HepG2 (cell line): ENCODE measurements at regions of chr15 and their contacts with region 1.

Region 1: GRCh38 chr15:31571671-31572070 is 245.0 kb downstream of the KLF13 start:
- DNase-seq: no peak
- ATAC-seq: no peak
- H3K4me3 ChIP-seq: no peak overlapping the region
- H3K27ac ChIP-seq: no peak overlapping the region
- H3K4me1 ChIP-seq: no peaks in the 10 kb centered on the region
- H3K27me3 ChIP-seq: peaks cover 1 to 10% of the 10 kb centered on the region in 2 experiments; a peak in 2 of 5 replicates
- CTCF ChIP-seq: no peak
- EP300 ChIP-seq: no peak
- POLR2A ChIP-seq: no peak
- RAD21 ChIP-seq: no peak

Region 2: DNA sequence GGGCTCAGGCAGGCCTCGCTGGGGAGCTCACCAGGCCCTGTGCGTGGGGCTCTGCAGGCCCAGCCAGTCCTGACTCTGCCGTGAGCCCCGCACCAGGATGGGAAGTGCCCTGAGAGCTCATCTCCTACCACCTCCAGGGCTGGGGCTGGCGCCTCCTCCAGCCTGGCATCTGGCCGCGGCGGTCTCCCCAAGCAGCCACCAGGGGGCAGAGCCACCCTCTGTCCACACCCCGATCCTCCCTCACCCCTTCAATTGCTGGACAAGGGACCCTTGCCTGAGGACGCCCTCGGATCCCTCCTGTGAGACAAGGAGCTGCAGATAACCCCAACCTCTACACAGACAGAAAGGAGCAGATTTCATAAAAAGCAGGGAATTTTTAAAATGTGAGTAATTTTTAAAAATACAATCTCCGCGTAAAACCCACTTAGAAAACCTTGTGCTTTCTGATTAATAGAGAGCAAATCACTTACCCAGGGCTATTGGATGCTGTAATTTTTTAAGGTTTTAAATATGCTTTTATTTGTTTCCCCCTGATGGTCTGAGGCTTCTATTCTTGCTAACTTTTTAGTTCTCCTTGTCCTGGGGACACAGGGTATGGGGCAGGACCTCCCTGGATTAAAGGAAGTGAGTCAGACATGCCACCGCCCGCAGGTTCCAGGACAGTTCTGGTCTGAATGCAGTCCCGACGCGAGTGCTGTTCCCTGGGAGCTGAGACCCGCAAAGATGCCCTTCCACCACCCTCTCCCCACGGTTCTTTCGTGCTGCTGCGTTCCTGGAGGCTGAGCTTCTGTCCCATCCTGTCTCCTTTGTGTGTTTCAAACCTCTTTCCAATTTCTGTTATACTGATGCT is 406.4 kb after region 1 on chr15:
- CTCF ChIA-PET with region 1: no interaction called
- POLR2A ChIA-PET with region 1: no interaction called
- in situ Hi-C with region 1: no loop called
- intact Hi-C with region 1: loop called (anchors 5 kb)
- DNase-seq: peak; percentile 16
- ATAC-seq: peak; percentile 92
- H3K4me3 ChIP-seq: no peak overlapping the region
- H3K27ac ChIP-seq: no peak overlapping the region
- H3K4me1 ChIP-seq: no peaks in the 10 kb centered on the region
- H3K27me3 ChIP-seq: peaks cover 0 to 2% of the 10 kb centered on the region in 2 experiments; a peak in 1 of 5 replicates
- CTCF ChIP-seq: peak; percentile 91
- EP300 ChIP-seq: no peak
- POLR2A ChIP-seq: no peak
- RAD21 ChIP-seq: peak; percentile 72